B cell (primary cell): ENCODE measurements at regions of chr14 and their contacts with region 1.

Region 1: GRCh38 chr14:30982533-30982932 is 42.9 kb upstream of the AP4S1 start:
- DNase-seq: peak; percentile 39
- ATAC-seq: peak; percentile 59
- H3K4me3 ChIP-seq: no peak overlapping the region
- H3K4me3 Mint-ChIP-seq: peak overlapping the region; percentile 39
- H3K27ac ChIP-seq: peak overlapping the region; percentile 3 to 67
- H3K27ac Mint-ChIP-seq: peak overlapping the region; percentile 82
- H3K4me1 ChIP-seq: peaks cover 27 to 29% of the 10 kb centered on the region in 2 donors
- H3K4me1 Mint-ChIP-seq: peaks cover 48% of the 10 kb centered on the region
- H3K27me3 ChIP-seq: no peaks in the 10 kb centered on the region
- H3K27me3 Mint-ChIP-seq: no peaks in the 10 kb centered on the region
- CTCF ChIP-seq: no peak

Region 2: GRCh38 chr14:30710876-30711275 is 271.7 kb before region 1 on chr14:
- CTCF ChIA-PET with region 1: no interaction called
- POLR2A ChIA-PET with region 1: no interaction called
- intact Hi-C with region 1: no loop called
- DNase-seq: no peak
- ATAC-seq: no peak
- H3K4me3 ChIP-seq: no peak overlapping the region
- H3K4me3 Mint-ChIP-seq: no peak overlapping the region
- H3K27ac ChIP-seq: no peak overlapping the region
- H3K27ac Mint-ChIP-seq: no peak overlapping the region
- H3K4me1 ChIP-seq: no peaks in the 10 kb centered on the region
- H3K4me1 Mint-ChIP-seq: no peaks in the 10 kb centered on the region
- H3K27me3 ChIP-seq: no peaks in the 10 kb centered on the region
- H3K27me3 Mint-ChIP-seq: no peaks in the 10 kb centered on the region
- CTCF ChIP-seq: no peak

Region 3: DNA sequence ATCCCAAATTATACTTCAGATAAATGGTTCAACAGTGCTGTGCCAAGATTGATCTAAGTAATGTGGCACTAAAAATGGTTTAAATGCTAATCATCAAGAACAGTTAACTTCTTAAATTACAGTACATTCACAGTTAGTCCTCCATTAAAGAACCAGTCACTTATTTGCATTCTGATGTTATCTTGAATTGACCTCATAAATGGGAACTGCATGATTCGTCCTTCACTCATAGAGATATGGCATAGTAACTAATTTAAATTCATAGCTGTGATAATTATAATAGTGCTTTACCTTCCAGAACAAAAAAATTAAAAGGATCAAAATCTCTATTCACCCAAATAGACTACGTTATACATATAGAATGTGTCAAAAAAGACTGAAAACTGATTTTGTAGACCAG is 47.1 kb before region 1 on chr14:
- CTCF ChIA-PET with region 1: no interaction called
- POLR2A ChIA-PET with region 1: no interaction called
- intact Hi-C with region 1: no loop called
- DNase-seq: no peak
- ATAC-seq: no peak
- H3K4me3 ChIP-seq: no peak overlapping the region
- H3K4me3 Mint-ChIP-seq: no peak overlapping the region
- H3K27ac ChIP-seq: no peak overlapping the region
- H3K27ac Mint-ChIP-seq: no peak overlapping the region
- H3K4me1 ChIP-seq: no peaks in the 10 kb centered on the region
- H3K4me1 Mint-ChIP-seq: no peaks in the 10 kb centered on the region
- H3K27me3 ChIP-seq: no peaks in the 10 kb centered on the region
- H3K27me3 Mint-ChIP-seq: no peaks in the 10 kb centered on the region
- CTCF ChIP-seq: no peak

Region 4: DNA sequence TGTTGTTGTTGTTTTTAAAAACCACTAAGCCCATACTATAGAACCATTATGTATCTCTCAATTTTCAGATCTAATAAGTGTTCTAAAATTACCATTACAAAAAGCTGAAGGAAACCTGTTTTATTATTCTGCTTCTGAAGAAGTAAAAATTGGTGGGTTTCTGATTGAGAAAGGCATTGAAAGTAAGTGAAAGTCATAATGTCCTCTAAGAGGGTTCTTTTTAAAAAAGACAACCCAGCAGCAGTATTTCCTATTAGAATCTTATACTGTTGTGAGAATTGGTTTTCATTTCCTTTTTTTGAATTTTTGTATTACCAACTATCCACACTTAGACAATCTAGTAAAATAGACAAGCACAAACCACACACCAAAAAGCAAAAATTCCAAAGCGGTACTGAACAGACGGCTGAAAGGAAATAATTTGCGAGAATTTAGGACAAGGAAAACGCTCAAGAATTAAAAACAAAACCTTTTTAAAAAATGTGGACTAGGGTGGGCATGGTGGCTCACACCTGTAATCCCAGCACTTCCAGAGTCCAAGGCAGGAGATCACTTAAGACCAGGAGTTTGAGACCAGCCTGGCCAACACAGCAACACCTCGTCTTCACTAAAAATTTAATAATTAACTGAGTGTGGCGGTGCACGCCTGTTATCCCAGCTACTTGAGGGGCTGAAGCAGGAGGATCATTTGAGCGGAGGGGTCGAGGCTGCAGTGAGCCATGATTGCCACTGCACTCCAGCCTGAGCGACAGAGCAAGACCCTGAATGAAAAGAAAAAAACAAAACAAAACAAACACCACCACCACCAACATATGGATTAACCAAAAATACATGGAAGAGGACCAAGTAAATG is 23.8 kb before region 1 on chr14:
- CTCF ChIA-PET with region 1: no interaction called
- POLR2A ChIA-PET with region 1: no interaction called
- intact Hi-C with region 1: no loop called
- DNase-seq: no peak
- ATAC-seq: no peak
- H3K4me3 ChIP-seq: no peak overlapping the region
- H3K4me3 Mint-ChIP-seq: peak overlapping the region; percentile 26
- H3K27ac ChIP-seq: no peak overlapping the region
- H3K27ac Mint-ChIP-seq: no peak overlapping the region
- H3K4me1 ChIP-seq: peaks cover 4 to 7% of the 10 kb centered on the region in 2 donors
- H3K4me1 Mint-ChIP-seq: peaks cover 41% of the 10 kb centered on the region
- H3K27me3 ChIP-seq: no peaks in the 10 kb centered on the region
- H3K27me3 Mint-ChIP-seq: no peaks in the 10 kb centered on the region
- CTCF ChIP-seq: no peak

Region 5: GRCh38 chr14:31084385-31084784 is 101.9 kb after region 1 on chr14:
- CTCF ChIA-PET with region 1: interaction called, 85 read pairs
- POLR2A ChIA-PET with region 1: no interaction called
- intact Hi-C with region 1: loop called (anchors 1 kb)
- DNase-seq: peak; percentile 75
- ATAC-seq: peak; percentile 94
- H3K4me3 ChIP-seq: no peak overlapping the region
- H3K4me3 Mint-ChIP-seq: no peak overlapping the region
- H3K27ac ChIP-seq: no peak overlapping the region
- H3K27ac Mint-ChIP-seq: peak overlapping the region; percentile 73
- H3K4me1 ChIP-seq: peaks cover 7 to 11% of the 10 kb centered on the region in 2 donors
- H3K4me1 Mint-ChIP-seq: peaks cover 10% of the 10 kb centered on the region
- H3K27me3 ChIP-seq: no peaks in the 10 kb centered on the region
- H3K27me3 Mint-ChIP-seq: no peaks in the 10 kb centered on the region
- CTCF ChIP-seq: no peak

Region 6: GRCh38 chr14:31127690-31128089 is 145.2 kb after region 1 on chr14:
- CTCF ChIA-PET with region 1: interaction called, 7 read pairs
- POLR2A ChIA-PET with region 1: no interaction called
- intact Hi-C with region 1: loop called (anchors 5 kb)
- DNase-seq: no peak
- ATAC-seq: no peak
- H3K4me3 ChIP-seq: no peak overlapping the region
- H3K4me3 Mint-ChIP-seq: no peak overlapping the region
- H3K27ac ChIP-seq: peak overlapping the region in 1 of 2 donors; percentile 29
- H3K27ac Mint-ChIP-seq: no peak overlapping the region
- H3K4me1 ChIP-seq: peaks cover 9 to 10% of the 10 kb centered on the region in 2 donors
- H3K4me1 Mint-ChIP-seq: peaks cover 16% of the 10 kb centered on the region
- H3K27me3 ChIP-seq: no peaks in the 10 kb centered on the region
- H3K27me3 Mint-ChIP-seq: no peaks in the 10 kb centered on the region
- CTCF ChIP-seq: no peak